ENCODE measurements at regions of chr6 and their contacts with region 1.

Region 1: DNA sequence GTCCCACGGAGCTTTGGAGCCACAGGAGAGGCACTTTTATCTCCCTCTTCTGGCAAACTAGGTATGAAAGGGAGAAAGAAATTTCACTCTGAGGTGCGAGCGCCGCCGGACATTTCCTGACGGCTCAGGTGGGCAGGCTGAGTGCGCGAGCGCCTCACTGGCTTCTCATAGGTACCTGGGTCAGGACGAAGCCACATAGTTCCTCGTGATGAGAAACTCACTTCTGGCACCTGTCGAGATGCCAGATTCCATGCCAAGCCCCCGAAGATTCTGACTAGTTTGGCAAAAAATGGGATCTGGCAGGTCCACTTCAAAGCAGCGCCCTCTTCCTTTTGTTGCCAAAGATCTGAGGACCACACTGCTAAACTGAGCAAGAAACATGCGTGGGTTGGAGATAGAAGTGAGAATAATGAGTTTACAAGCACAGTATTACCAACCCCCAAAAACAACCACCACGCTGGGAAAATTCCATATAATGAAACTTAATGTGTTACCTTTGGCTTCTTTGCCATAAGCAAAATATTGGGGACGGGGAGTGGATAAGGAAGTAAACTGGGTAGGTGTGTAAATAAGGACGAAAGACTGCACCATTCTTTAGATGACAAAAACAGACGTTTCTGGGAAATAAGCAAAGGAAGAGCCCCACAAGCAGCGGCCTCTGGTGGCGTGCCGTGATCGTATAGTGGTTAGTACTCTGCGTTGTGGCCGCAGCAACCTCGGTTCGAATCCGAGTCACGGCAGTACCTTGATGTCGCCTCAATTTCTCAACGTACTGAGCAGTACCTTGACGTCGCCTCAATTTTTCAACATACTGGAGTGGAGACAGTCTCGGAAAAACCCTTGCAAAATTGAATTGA is 89.8 kb upstream of the PRSS16 start:
- DNase-seq: peak; percentile 66
- ATAC-seq: peak; percentile 83
- H3K4me3 ChIP-seq: peak overlapping the region; percentile 70
- H3K27ac ChIP-seq: peak overlapping the region; percentile 45
- H3K4me1 ChIP-seq: peaks cover 8% of the 10 kb centered on the region
- H3K27me3 ChIP-seq: no peaks in the 10 kb centered on the region
- CTCF ChIP-seq: peak in 2 of 3 experiments; percentile 56 to 63; a peak in 5 of 6 replicates
- EP300 ChIP-seq: peak in 1 of 2 experiments; percentile 74; a peak in 1 of 4 replicates
- POLR2A ChIP-seq: no peak
- RAD21 ChIP-seq: peak; percentile 43

Region 2: GRCh38 chr6:26401987-26402658 is 755.6 kb before region 1 on chr6 and contains the start of gene BTN3A1:
- CTCF ChIA-PET with region 1: no interaction called
- POLR2A ChIA-PET with region 1: no interaction called
- RAD21 ChIA-PET with region 1: no interaction called
- SMC1A ChIA-PET with region 1: no interaction called
- in situ Hi-C with region 1: no loop called
- intact Hi-C with region 1: no loop called
- DNase-seq: peak; percentile 81
- ATAC-seq: peak; percentile 97
- H3K4me3 ChIP-seq: peak within 1 kb of the TSS; percentile 85
- H3K27ac ChIP-seq: peak within 1 kb of the TSS; percentile 84
- H3K4me1 ChIP-seq: peaks cover 21% of the 10 kb centered on the region
- H3K27me3 ChIP-seq: no peaks in the 10 kb centered on the region
- CTCF ChIP-seq: no peak
- EP300 ChIP-seq: no peak; a peak in 1 of 4 replicates
- POLR2A ChIP-seq: peak; percentile 62
- RAD21 ChIP-seq: no peak
- polyA plus RNA-seq, gene BTN3A1: 5.6 TPM

Region 3: DNA sequence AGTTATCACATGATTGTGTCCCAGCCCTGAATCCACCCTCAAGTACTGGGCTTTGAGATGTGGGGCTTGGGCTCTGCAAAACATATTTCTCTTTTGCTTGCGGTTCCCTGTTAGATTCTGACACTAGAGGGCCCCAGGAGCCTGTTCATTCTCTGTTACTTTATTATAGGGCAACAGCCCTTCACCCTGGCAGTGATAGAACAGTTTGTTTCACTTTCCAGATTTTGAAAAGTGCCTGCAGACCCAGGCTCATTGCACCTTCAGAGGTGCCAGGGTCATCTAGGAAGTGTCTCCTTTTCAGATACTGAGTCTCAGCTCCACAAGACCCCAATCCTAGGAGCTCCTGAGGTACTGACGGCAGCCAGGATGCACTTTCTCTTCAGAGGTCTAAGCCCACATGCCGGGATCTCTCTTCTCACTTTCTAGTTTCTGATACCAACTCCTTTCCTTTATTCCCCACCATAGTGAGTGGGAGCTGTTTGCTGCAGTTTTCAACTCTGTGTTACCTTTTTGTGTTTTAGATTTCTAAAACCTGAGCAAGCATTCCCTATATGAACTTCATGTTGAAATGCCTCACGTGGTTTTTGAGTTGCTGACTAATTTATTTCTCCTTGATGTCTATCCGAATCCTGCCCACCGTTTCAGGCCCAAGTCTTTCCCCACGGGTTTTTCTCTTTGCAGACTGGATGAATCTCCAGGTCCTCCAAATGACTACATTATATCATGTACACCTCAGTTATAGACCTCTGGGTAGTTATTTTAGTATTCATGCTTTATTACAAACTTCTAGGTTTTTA is 550.1 kb before region 1 on chr6:
- CTCF ChIA-PET with region 1: no interaction called
- POLR2A ChIA-PET with region 1: no interaction called
- RAD21 ChIA-PET with region 1: no interaction called
- SMC1A ChIA-PET with region 1: interaction called, 3 read pairs
- in situ Hi-C with region 1: no loop called
- intact Hi-C with region 1: loop called (anchors 5 kb)
- DNase-seq: no peak
- ATAC-seq: peak; percentile 99
- H3K4me3 ChIP-seq: no peak overlapping the region
- H3K27ac ChIP-seq: no peak overlapping the region
- H3K4me1 ChIP-seq: no peaks in the 10 kb centered on the region; the same call in 1 of the 2 replicates
- H3K27me3 ChIP-seq: no peaks in the 10 kb centered on the region
- CTCF ChIP-seq: peak; percentile 73 to 87 (median 78)
- EP300 ChIP-seq: no peak
- POLR2A ChIP-seq: no peak
- RAD21 ChIP-seq: peak; percentile 96

Region 4: GRCh38 chr6:27002447-27002846 is 155.2 kb before region 1 on chr6:
- CTCF ChIA-PET with region 1: no interaction called
- POLR2A ChIA-PET with region 1: no interaction called
- RAD21 ChIA-PET with region 1: no interaction called
- SMC1A ChIA-PET with region 1: no interaction called
- in situ Hi-C with region 1: no loop called
- intact Hi-C with region 1: no loop called
- DNase-seq: no peak
- ATAC-seq: no peak
- H3K4me3 ChIP-seq: no peak overlapping the region
- H3K27ac ChIP-seq: no peak overlapping the region
- H3K4me1 ChIP-seq: no peaks in the 10 kb centered on the region
- H3K27me3 ChIP-seq: no peaks in the 10 kb centered on the region
- CTCF ChIP-seq: no peak
- EP300 ChIP-seq: no peak
- POLR2A ChIP-seq: no peak
- RAD21 ChIP-seq: no peak

Region 5: DNA sequence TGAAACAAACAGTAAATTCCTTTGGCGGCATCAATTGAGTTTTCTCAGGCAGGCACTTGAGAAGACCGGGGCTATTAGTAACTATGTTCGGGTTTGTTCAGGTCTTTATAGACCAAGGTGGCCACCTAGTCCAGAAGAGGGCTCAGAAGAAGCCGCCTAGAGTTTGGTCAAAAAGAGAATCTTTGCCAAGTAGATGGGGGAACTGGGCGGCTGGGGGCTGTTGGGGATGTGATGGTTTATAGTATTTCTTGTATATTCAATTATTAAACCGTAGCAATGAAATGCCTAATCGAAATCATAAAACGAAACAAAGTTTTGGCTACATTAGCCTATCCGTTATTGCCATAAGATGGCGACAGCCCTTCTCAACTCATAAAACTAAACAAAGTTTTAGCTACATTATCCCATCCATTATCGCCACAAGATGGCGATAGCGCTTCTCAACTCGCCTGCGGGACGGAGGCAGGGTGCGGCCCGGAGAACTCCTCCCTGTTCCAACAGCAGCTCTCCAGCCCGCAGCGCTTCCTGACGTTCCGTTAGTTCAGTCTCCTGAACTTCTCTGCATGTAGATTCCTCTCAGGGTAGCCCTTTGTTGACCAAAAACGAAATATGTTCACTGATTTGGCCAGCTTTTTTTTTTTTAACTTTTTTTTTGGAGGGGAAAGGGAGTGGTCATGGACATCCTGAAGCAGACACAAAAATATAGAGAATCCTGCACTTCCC is 30.7 kb before region 1 on chr6:
- CTCF ChIA-PET with region 1: interaction called, 46 read pairs
- POLR2A ChIA-PET with region 1: interaction called, 19 read pairs
- RAD21 ChIA-PET with region 1: interaction called, 37 read pairs
- SMC1A ChIA-PET with region 1: interaction called, 29 read pairs
- in situ Hi-C with region 1: no loop called
- intact Hi-C with region 1: loop called (anchors 2 kb)
- DNase-seq: peak; percentile 85
- ATAC-seq: peak; percentile 72
- H3K4me3 ChIP-seq: peak overlapping the region; percentile 72
- H3K27ac ChIP-seq: peak overlapping the region; percentile 93
- H3K4me1 ChIP-seq: peaks cover 16% of the 10 kb centered on the region
- H3K27me3 ChIP-seq: no peaks in the 10 kb centered on the region
- CTCF ChIP-seq: peak; percentile 73 to 98 (median 83); a peak in 5 of 6 replicates
- EP300 ChIP-seq: no peak
- POLR2A ChIP-seq: peak; percentile 54
- RAD21 ChIP-seq: peak; percentile 86

Region 6: GRCh38 chr6:27146706-27147505 is 10.8 kb before region 1 on chr6:
- CTCF ChIA-PET with region 1: interaction called, 28 read pairs
- POLR2A ChIA-PET with region 1: interaction called, 27 read pairs
- RAD21 ChIA-PET with region 1: interaction called, 6 read pairs
- SMC1A ChIA-PET with region 1: interaction called, 16 read pairs
- in situ Hi-C with region 1: no loop called
- intact Hi-C with region 1: no loop called
- DNase-seq: peak; percentile 100
- ATAC-seq: peak; percentile 73
- H3K4me3 ChIP-seq: peak overlapping the region; percentile 92
- H3K27ac ChIP-seq: peak overlapping the region; percentile 98
- H3K4me1 ChIP-seq: peaks cover 10% of the 10 kb centered on the region; the same call in 1 of the 2 replicates
- H3K27me3 ChIP-seq: no peaks in the 10 kb centered on the region
- CTCF ChIP-seq: no peak
- EP300 ChIP-seq: no peak; a peak in 1 of 4 replicates
- POLR2A ChIP-seq: peak; percentile 88
- RAD21 ChIP-seq: no peak

Region 7: GRCh38 chr6:27177485-27178406 is 20.1 kb after region 1 on chr6:
- CTCF ChIA-PET with region 1: interaction called, 27 read pairs
- POLR2A ChIA-PET with region 1: interaction called, 5 read pairs
- RAD21 ChIA-PET with region 1: interaction called, 9 read pairs
- SMC1A ChIA-PET with region 1: interaction called, 14 read pairs
- in situ Hi-C with region 1: no loop called
- intact Hi-C with region 1: no loop called
- DNase-seq: peak; percentile 61
- ATAC-seq: peak; percentile 89
- H3K4me3 ChIP-seq: peak overlapping the region; percentile 89
- H3K27ac ChIP-seq: peak overlapping the region; percentile 93
- H3K4me1 ChIP-seq: no peaks in the 10 kb centered on the region
- H3K27me3 ChIP-seq: no peaks in the 10 kb centered on the region
- CTCF ChIP-seq: peak; percentile 65 to 72 (median 70)
- EP300 ChIP-seq: no peak
- POLR2A ChIP-seq: peak; percentile 56; the same call in 1 of the 2 replicates
- RAD21 ChIP-seq: peak; percentile 54

Region 8: GRCh38 chr6:27241443-27241842 is 83.8 kb after region 1 on chr6:
- CTCF ChIA-PET with region 1: no interaction called
- POLR2A ChIA-PET with region 1: no interaction called
- RAD21 ChIA-PET with region 1: no interaction called
- SMC1A ChIA-PET with region 1: no interaction called
- in situ Hi-C with region 1: no loop called
- intact Hi-C with region 1: no loop called
- DNase-seq: no peak
- ATAC-seq: no peak
- H3K4me3 ChIP-seq: no peak overlapping the region
- H3K27ac ChIP-seq: no peak overlapping the region
- H3K4me1 ChIP-seq: peaks cover 9% of the 10 kb centered on the region
- H3K27me3 ChIP-seq: no peaks in the 10 kb centered on the region
- CTCF ChIP-seq: no peak
- EP300 ChIP-seq: no peak
- POLR2A ChIP-seq: no peak
- RAD21 ChIP-seq: no peak

Region 9: GRCh38 chr6:27608916-27609883 is 451.5 kb after region 1 on chr6:
- CTCF ChIA-PET with region 1: interaction called, 6 read pairs
- POLR2A ChIA-PET with region 1: no interaction called
- RAD21 ChIA-PET with region 1: interaction called, 3 read pairs
- SMC1A ChIA-PET with region 1: no interaction called
- in situ Hi-C with region 1: no loop called
- intact Hi-C with region 1: loop called (anchors 5 kb)
- DNase-seq: peak; percentile 56
- ATAC-seq: peak; percentile 65
- H3K4me3 ChIP-seq: no peak overlapping the region
- H3K27ac ChIP-seq: no peak overlapping the region
- H3K4me1 ChIP-seq: no peaks in the 10 kb centered on the region
- H3K27me3 ChIP-seq: no peaks in the 10 kb centered on the region
- CTCF ChIP-seq: peak; percentile 82 to 90 (median 90)
- EP300 ChIP-seq: no peak
- POLR2A ChIP-seq: no peak
- RAD21 ChIP-seq: peak; percentile 82

Region 10: DNA sequence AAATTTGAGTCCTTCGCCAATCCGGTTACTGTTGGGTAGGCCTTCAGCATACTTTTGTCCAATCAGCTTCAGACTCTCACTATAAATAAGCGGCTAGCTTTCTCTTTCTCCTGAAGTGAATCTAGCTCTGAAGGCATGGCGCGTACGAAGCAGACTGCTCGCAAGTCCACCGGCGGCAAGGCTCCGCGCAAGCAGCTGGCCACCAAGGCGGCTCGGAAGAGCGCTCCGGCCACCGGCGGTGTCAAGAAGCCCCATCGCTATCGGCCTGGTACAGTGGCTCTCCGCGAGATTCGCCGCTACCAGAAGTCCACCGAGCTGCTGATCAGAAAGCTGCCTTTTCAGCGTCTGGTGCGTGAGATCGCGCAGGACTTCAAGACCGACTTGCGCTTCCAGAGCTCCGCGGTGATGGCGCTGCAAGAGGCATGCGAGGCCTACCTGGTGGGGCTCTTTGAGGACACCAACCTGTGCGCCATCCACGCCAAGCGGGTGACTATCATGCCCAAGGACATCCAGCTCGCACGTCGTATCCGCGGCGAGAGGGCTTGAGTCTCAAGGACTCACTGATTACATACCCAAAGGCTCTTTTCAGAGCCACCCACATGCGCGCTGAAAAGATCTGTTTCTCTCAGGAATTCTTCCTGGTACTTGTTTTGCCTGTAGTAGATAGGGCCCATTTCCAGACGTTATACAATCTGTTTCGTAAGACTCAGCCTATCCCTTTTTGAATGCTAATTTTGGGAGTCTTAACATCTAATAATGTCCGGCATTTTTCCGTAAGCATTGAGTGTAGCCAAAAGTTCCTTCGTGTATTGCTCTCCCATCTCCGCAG is 652.5 kb after region 1 on chr6:
- CTCF ChIA-PET with region 1: interaction called, 3 read pairs
- POLR2A ChIA-PET with region 1: interaction called, 3 read pairs
- RAD21 ChIA-PET with region 1: no interaction called
- SMC1A ChIA-PET with region 1: no interaction called
- in situ Hi-C with region 1: loop called (anchors 10 kb)
- intact Hi-C with region 1: no loop called
- DNase-seq: peak; percentile 98
- ATAC-seq: peak; percentile 43
- H3K4me3 ChIP-seq: peak overlapping the region; percentile 74
- H3K27ac ChIP-seq: peak overlapping the region; percentile 82
- H3K4me1 ChIP-seq: peaks cover 25% of the 10 kb centered on the region
- H3K27me3 ChIP-seq: no peaks in the 10 kb centered on the region
- CTCF ChIP-seq: peak in 1 of 3 experiments; percentile 19; a peak in 2 of 6 replicates
- EP300 ChIP-seq: no peak
- POLR2A ChIP-seq: peak; percentile 95
- RAD21 ChIP-seq: no peak

Measured in GM12878 (cell line).